RWPE1 (cell line): ENCODE measurements at regions of chr6 and their contacts with region 1.

Region 1: GRCh38 chr6:162099685-162100084 is 627.9 kb downstream of the PRKN start:
- DNase-seq: peak; percentile 77
- H3K27ac ChIP-seq: no peak overlapping the region
- CTCF ChIP-seq: no peak

Region 2: DNA sequence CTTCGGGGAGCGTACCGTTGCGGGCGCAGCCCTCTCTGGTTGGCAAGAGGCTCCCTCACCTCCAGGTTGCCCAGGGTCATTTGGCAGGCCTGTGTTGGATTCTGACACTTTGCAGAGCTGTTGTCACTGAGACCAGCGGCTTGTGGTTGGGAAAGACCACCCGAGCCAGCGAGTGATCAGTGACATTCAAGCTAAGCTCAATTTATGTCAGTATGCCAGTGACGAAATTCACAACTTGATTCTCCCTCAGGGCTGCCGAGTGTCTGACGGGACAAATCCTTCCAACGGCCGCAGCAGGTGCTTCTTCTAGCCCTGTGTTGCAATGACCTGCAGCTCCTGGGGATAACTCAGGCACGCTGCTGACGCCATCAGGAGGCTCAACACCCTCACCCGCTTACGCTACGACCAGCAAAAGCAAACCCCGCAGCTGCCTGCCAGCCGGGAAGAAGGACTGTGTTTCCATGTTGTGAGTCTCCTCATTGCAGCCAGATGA is 1824.1 kb before region 1 on chr6:
- CTCF ChIA-PET with region 1: no interaction called
- POLR2A ChIA-PET with region 1: no interaction called
- DNase-seq: no peak
- H3K27ac ChIP-seq: no peak overlapping the region
- CTCF ChIP-seq: no peak

Region 3: DNA sequence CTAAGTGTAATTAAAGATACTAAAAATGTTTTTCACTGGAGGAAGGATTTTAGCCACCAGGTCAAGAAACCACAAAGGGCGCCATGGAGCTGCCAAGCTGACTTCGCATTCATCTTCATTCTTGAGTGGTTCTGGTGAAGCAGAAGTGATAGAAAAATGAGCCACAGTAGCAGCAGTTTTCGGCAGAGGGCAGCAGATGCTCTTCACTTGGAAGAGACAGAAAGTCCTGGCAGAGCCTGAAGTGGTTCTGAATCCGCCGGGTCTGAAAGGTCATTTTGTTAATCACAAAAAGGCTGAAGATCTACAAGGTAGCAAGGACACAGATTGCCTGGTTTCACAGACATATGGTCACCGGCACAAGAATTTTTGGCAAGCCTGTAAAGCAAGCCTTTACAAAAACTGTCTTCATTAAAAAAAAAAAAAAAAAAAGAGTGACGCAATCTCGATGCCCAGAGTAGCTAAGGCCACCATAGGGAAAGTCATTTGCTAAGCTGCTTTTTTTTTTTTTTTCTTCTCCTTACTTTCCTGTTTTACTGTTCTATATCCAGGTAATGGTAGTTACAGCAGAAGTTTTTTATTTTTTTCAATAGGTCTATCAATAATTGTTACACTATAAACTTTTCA is 480.7 kb before region 1 on chr6:
- CTCF ChIA-PET with region 1: interaction called, 10 read pairs
- POLR2A ChIA-PET with region 1: no interaction called
- DNase-seq: peak; percentile 48
- H3K27ac ChIP-seq: no peak overlapping the region
- CTCF ChIP-seq: peak; percentile 57